ENCODE measurements at regions of chr12 and their contacts with region 1.

Region 1: DNA sequence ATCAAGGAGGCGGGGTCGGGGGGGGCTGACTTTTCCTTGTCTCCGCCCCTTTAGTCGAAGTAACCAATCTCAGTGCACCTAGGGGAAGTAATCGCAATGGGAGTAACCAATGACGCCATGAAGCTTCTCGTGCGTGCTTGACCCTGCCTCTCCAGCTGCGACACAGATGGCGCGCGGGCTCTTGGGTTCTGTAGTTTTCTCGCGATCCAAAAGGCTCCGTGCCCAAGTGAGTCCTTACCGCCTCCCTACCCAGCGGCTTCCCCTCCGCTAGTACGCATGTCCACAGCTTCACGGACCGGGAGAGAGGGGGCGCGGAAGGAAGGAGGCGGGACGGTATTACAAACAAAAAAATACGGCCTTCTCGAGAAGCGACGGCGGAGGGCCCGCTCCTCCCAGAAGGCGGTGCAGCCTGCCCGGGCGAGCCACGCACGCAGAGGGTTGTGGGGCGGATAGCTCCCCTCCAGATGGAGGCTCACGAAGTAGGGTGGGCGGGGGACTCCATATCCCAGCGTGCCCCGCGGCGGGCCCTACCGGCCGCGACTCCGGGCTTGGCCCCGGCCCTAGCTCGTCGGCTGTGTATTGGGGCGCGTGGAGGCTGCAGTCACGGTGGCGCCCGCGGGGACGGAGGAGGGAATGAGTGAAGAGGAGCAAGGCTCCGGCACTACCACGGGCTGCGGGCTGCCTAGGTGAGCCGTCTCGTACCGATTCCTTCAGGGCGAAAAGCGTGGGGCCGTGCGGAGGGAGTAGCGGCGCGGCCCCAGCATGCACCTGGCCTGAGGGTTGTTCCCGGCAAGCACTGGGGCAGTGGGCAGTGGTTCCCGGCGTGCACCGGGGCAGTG is at the start of gene TARBP2:
- DNase-seq: peak; percentile 94
- H3K4me3 Mint-ChIP-seq: peak within 1 kb of the TSS; percentile 90
- H3K27ac Mint-ChIP-seq: peak within 1 kb of the TSS; percentile 98
- H3K4me1 Mint-ChIP-seq: peaks cover 27% of the 10 kb centered on the region
- H3K27me3 Mint-ChIP-seq: no peaks in the 10 kb centered on the region
- total RNA-seq, gene TARBP2: 43.9 and 47.0 TPM in 2 replicates

Region 2: DNA sequence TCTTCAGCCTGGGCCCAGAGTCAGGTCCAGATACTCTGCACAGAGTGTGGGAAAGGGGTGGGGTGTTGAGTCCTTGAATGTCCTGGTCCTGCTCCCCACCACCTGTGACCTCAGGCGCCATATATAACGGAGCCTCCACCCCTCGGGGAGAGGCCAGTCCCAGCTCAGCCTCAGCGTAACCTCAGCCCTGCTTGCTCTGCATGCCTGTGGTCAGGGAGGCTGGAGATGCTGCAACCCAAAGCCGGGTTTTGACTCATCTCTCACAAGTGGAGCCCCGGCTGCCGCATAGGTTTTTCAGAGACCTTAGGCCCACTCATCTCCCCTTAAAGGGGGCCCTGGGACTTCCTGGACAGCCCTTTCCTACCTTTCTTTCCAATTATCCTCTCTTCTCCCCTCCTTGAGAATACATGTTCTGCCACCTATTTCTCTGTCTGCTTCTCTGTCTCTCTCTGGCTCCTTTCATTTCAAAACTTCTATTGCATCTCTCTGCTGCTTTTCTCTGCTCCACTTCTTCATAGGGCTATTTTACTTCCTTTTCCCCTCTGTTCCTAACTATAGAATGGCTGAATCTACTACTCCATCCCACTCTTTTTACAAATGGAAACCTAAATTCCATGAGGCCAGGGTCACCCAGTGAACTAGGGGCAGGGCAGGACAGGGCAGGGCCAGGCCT is 295.1 kb before region 1 on chr12:
- intact Hi-C with region 1: loop called (anchors 10 kb)
- DNase-seq: peak; percentile 75
- H3K4me3 Mint-ChIP-seq: peak overlapping the region; percentile 82
- H3K27ac Mint-ChIP-seq: peak overlapping the region; percentile 66
- H3K4me1 Mint-ChIP-seq: peaks cover 56% of the 10 kb centered on the region
- H3K27me3 Mint-ChIP-seq: no peaks in the 10 kb centered on the region

Region 3: GRCh38 chr12:53344824-53345485 is 156.0 kb before region 1 on chr12:
- intact Hi-C with region 1: loop called (anchors 1 kb)
- DNase-seq: peak; percentile 47
- H3K4me3 Mint-ChIP-seq: peak overlapping the region; percentile 98
- H3K27ac Mint-ChIP-seq: peak overlapping the region; percentile 93
- H3K4me1 Mint-ChIP-seq: peaks cover 18% of the 10 kb centered on the region
- H3K27me3 Mint-ChIP-seq: peaks cover 7% of the 10 kb centered on the region

Region 4: DNA sequence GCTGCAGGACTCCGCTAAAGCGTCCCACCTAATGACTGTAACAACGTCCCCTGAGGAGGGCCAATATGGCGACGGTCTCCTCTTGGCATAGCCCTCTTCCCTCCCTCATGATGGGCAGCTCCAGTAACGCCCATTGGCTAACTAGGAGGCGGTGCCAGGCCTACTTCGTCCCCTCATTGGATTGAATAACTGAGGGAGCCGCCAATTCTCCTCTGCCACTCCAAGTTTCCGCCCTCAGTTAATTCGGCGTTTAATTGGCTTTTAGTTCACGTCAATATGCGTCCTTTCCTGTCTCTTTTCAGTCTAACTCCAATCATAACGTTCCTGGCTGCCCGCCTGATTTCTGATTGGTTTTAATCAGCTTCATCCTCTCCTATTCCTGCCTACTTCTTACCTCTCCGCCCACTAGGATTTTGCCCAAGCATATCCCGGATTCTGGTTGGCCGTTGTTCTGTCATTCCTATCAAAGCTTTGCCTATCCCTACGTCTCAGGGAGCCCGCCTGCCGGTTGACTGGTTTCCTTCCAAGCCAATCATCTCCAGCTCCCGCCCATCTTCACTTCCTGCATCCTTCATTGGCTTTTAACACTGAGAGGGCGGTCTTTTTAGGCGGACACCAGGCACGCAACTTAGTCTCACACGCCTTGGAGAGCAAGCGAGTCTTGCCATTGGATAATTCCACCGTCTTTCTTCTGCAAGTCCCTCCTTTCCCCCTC is 121.4 kb before region 1 on chr12:
- intact Hi-C with region 1: loop called (anchors 2 kb)
- DNase-seq: peak; percentile 98
- H3K4me3 Mint-ChIP-seq: no peak overlapping the region
- H3K27ac Mint-ChIP-seq: no peak overlapping the region
- H3K4me1 Mint-ChIP-seq: peaks cover 35% of the 10 kb centered on the region
- H3K27me3 Mint-ChIP-seq: no peaks in the 10 kb centered on the region

Region 5: DNA sequence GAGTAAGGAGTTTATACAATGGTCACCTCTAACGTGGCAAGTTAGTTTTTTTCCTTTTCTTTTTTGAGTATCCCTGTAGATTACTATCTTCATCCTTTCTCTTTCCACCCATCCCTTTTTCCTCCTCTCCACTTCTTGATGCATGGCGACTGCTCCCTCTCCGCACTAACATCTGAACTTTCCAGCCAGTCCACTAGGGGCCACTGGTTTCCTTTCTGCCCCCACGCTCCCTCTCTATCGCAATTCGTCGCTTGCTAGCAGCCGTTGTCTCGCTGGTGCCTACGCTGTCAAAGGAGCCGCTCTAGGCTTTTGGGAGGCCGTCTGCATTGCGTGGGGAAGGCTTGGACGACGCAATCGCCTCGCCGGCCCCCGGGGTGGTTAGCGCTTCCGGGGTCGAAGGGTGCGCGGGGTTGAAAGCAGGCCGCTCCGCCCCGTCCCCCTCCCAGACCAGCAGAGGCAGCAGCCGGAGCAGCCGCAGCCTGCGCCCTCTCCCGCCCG is 49.3 kb before region 1 on chr12 and contains the start of gene PCBP2:
- intact Hi-C with region 1: loop called (anchors 1 kb)
- DNase-seq: peak; percentile 97
- H3K4me3 Mint-ChIP-seq: peak within 1 kb of the TSS; percentile 100
- H3K27ac Mint-ChIP-seq: peak within 1 kb of the TSS; percentile 100
- H3K4me1 Mint-ChIP-seq: peaks cover 35% of the 10 kb centered on the region
- H3K27me3 Mint-ChIP-seq: no peaks in the 10 kb centered on the region
- total RNA-seq, gene PCBP2: 985 and 1,001 TPM in 2 replicates

Region 6: DNA sequence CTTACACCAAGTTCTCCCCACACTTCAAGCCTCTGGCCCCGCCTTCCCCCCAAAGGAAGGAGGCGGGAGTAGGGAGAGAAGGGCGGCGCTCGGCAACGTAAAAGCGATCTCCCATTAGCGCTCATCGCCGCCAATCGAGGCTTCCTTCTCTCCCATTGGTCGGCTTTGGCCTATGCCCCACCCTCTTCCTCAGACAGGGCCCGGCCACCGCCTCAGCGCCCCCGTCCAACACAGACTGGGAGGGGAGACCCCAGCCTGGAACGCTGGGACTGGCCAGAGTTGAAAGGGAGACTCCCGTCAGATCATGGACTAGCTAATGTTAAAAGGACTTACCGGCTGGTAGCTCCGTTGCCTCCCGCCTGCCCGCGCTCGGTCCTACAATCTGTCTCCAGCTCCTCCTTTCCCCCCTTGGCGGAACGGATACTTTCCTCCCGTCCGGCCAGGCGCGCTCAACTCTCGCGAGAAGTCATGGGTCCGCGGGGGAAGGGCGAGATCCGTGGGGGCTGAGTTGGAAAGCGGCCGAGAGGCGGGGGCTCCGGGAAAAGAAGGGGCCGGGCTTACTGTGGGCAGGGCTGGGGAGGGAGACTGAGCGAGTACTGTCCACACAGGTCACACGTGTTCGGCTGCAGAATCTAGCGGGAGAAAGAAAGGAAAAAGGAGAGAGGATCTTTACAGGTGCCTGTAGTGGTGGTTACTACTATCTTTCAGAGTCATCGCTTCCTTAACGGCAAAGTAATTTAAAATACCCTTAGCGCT is 125.1 kb after region 1 on chr12 and contains the start of gene ATF7:
- intact Hi-C with region 1: loop called (anchors 1 kb)
- DNase-seq: peak; percentile 97
- H3K4me3 Mint-ChIP-seq: peak within 1 kb of the TSS; percentile 100
- H3K27ac Mint-ChIP-seq: peak within 1 kb of the TSS; percentile 79
- H3K4me1 Mint-ChIP-seq: peaks cover 35% of the 10 kb centered on the region
- H3K27me3 Mint-ChIP-seq: peaks cover 2% of the 10 kb centered on the region
- total RNA-seq, gene ATF7: 28.0 and 32.0 TPM in 2 replicates

Region 7: GRCh38 chr12:53675651-53676453 is 174.9 kb after region 1 on chr12 and contains the start of gene ATP5MC2:
- intact Hi-C with region 1: loop called (anchors 1 kb)
- DNase-seq: peak; percentile 97
- H3K4me3 Mint-ChIP-seq: peak within 1 kb of the TSS; percentile 93
- H3K27ac Mint-ChIP-seq: peak within 1 kb of the TSS; percentile 92
- H3K4me1 Mint-ChIP-seq: peaks cover 28% of the 10 kb centered on the region
- H3K27me3 Mint-ChIP-seq: peaks cover 29% of the 10 kb centered on the region
- total RNA-seq, gene ATP5MC2: 433 and 438 TPM in 2 replicates